Activated CD4-positive, alpha-beta memory T cell treated with anti-CD3 and anti-CD28 coated beads for 36 hours (primary cell): ENCODE measurements at regions of chr14 and their contacts with region 1.

Region 1: DNA sequence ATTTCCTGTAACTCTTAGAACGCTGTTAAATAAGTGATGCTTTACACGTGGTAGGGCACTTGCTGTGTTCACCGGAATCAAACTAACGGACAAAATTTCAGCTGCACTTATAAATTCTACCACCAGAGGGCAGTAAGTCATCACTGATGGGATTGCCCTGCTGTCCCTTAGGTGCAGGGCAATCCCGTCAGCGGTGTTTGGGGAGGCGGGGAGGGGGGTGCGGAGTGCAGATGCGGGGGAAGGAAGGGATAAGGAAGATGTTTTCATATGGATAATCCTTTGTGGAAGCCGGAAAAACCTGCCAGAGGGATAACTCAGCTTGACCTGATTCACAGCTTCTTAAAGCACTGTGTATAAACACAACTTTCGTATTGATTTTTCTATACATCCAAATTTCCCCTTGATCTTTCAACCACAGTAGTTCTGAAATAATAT is 21.7 kb upstream of the SLC10A1 start:
- DNase-seq: peak; percentile 54
- H3K4me3 Mint-ChIP-seq: no peak overlapping the region
- H3K27ac Mint-ChIP-seq: no peak overlapping the region
- H3K4me1 Mint-ChIP-seq: peaks cover 4% of the 10 kb centered on the region
- H3K27me3 Mint-ChIP-seq: peaks cover 3% of the 10 kb centered on the region

Region 2: GRCh38 chr14:69879175-69880043 is 60.6 kb after region 1 on chr14 and contains the start of gene SMOC1:
- CTCF ChIA-PET with region 1: interaction called, 4 read pairs
- POLR2A ChIA-PET with region 1: no interaction called
- intact Hi-C with region 1: loop called (anchors 10 kb)
- DNase-seq: peak; percentile 43
- H3K4me3 Mint-ChIP-seq: no peak within 1 kb of the TSS
- H3K27ac Mint-ChIP-seq: no peak within 1 kb of the TSS
- H3K4me1 Mint-ChIP-seq: no peaks in the 10 kb centered on the region
- H3K27me3 Mint-ChIP-seq: peaks cover 43% of the 10 kb centered on the region
- total RNA-seq, gene SMOC1: not detected

Region 3: DNA sequence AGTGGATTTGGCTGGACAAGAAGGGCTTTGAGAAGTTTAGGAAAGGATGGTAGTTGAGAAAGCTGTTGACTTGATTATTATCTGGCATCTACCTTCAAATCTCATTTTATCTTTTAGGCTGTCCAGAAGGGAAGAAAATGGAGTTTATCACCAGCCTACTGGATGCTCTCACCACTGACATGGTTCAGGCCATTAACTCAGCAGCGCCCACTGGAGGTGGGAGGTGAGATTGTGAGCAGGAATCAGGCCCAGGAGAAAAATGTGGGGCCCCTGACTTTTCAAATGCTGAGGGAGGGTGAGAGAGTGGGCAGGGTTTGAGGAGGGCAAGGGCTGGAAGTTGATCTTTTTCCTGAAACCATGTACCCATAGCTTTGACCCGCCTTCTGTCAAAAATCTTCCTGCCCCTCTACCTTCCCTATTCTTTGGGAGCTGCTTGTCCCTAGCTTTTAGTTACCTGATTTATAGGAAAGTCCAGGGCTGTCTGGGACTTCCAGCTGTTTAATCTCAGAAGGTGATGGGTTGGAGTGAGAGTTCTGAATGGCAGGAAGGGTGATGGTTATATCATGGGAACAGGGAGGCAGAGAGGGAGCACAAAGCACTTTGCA is 194.6 kb after region 1 on chr14:
- CTCF ChIA-PET with region 1: interaction called, 8 read pairs
- POLR2A ChIA-PET with region 1: no interaction called
- intact Hi-C with region 1: loop called (anchors 5 kb)
- DNase-seq: peak; percentile 59
- H3K4me3 Mint-ChIP-seq: no peak overlapping the region
- H3K27ac Mint-ChIP-seq: no peak overlapping the region
- H3K4me1 Mint-ChIP-seq: peaks cover 4% of the 10 kb centered on the region
- H3K27me3 Mint-ChIP-seq: peaks cover 6% of the 10 kb centered on the region

Region 4: DNA sequence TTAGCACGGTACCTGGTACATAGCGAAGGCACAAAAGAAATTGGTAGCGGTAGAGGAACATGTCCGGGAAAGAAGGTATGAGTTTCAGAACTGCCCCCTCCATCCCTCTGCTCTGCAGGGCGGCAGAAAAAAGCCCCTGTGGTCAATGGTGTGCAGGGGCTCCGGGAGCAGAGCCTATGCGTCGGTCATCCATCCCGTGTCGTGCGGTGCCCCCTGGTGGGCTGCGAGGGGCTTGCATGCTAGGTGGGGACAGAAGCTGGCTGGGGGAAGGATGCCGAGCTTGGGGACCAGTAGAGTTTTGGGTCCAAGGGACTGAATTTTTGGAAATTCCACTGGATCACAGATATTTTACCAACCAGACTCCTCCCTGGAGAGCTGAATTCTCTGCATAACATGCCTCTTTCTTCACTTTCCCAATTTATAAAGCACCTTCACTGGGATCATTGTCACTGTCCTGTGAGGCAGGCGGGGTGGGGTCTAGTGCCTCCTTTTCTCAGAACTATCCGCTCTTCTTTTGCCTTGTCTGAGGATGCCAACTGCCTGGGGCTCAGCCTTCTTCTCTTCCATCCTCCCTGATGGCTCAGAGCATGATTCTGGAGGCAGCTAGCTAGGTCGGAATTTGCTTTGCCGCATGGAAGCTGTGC is 209.1 kb after region 1 on chr14:
- CTCF ChIA-PET with region 1: interaction called, 65 read pairs
- POLR2A ChIA-PET with region 1: no interaction called
- intact Hi-C with region 1: loop called (anchors 1 kb)
- DNase-seq: peak; percentile 77
- H3K4me3 Mint-ChIP-seq: no peak overlapping the region
- H3K27ac Mint-ChIP-seq: no peak overlapping the region
- H3K4me1 Mint-ChIP-seq: no peaks in the 10 kb centered on the region
- H3K27me3 Mint-ChIP-seq: no peaks in the 10 kb centered on the region